ENCODE measurements at regions of chr1 and their contacts with region 1.

Region 1: DNA sequence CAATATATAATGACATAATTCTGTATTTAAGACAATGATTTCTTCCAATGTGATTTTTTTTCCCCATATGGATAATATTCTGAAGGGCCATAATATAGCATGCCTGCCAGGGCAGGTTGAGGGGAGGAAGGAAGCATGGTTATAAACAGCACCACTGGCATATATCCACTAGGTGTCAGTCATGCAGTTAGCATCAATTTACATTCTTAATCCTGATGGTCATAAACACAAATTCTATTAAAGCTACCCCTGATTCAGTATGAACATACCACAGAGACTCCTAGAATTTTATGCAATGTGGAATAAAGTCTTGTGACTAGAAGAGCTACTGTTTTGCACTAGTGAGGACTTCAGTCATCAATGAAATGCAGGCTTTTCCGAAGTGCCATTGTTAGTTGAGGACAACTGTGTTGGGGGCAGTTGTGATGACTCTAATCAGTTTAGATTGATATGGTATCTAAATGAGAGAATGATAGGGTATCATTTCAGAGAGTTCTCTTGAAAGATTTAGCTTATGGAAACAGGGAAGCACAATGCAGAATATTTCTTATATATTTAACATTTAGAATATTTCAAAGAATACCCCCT is 342.7 kb upstream of the NR5A2 start:
- DNase-seq: peak; percentile 50

Region 2: DNA sequence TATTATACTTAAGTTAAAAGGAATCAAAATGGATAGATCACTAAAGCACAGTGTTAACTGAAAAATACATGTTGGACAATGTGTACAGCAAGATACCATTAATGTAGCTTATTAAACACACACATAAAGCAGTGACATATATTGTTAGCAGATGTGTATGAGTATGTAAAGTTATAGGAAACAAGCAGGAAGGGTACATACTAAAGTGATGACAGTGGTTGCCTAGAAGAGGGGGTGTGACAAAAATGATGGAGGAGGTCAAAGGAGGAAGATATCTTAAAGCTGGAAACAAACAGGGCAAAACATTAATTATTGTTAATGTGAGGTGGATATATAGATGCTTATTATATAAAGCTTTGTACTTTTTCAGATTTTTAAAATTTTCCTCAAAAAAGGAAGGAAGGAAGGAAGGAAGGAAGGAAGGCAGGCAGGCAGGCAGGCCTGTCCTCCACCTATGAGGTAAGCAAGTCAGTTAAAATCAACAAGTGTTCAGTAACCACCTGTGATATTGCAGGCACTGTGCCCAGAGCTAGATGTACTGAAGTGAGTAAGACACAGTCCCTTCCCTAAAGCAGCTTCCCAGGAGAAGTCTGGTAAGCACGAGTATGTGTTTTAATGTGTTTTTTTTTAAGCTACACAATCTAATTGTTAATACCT is 89.8 kb after region 1 on chr1:
- in situ Hi-C with region 1: no loop called
- DNase-seq: peak; percentile 64

Region 3: GRCh38 chr1:199786695-199787094 is 101.9 kb after region 1 on chr1:
- in situ Hi-C with region 1: no loop called
- DNase-seq: peak; percentile 41

Region 4: GRCh38 chr1:200184196-200184595 is 499.4 kb after region 1 on chr1:
- in situ Hi-C with region 1: loop called (anchors 25 kb)
- DNase-seq: peak; percentile 77

Measured in Caki2 (cell line).